CD4-positive, alpha-beta memory T cell (primary cell): ENCODE measurements at regions of chr12 and their contacts with region 1.

Region 1: DNA sequence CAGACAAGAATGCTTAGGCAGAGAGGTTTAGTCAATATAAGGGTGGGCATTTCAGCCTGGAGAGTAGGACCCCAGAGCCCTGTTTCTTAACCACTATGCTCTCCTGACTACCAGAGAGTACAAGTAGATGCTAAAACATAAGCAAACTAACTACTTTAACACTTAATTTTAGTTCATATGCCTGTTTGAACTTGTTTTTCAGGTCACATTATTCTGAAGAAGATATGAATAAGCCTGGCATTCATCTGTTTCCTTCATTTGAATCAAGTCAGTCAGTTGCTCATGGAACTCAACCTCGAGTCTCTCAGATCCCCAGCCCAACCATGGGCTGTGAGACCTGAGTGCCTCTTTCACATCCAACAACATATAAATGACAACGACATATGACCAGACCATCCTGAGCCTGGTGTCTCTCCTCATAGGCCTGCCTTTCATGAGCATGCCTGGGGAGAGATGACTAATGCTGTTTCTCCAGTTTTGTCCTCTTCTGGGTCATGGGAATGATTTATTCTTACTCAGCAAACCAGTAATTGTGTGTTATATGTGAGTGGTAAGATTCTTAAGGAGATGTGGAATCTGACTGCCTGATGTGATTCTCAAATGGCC is 251.1 kb upstream of the BTG1 start:
- DNase-seq: no peak
- H3K4me3 ChIP-seq: no peak overlapping the region
- H3K4me3 Mint-ChIP-seq: peak overlapping the region in 6 of 8 donors; percentile 19 to 81 (median 57)
- H3K27ac ChIP-seq: peak overlapping the region; percentile 72
- H3K27ac Mint-ChIP-seq: peak overlapping the region; percentile 93 to 98 (median 97)
- H3K4me1 ChIP-seq: peaks cover 93% of the 10 kb centered on the region
- H3K4me1 Mint-ChIP-seq: peaks cover 74 to 100% (median 89%) of the 10 kb centered on the region in 4 donors
- H3K27me3 ChIP-seq: no peaks in the 10 kb centered on the region
- H3K27me3 Mint-ChIP-seq: no peaks in the 10 kb centered on the region

Region 2: GRCh38 chr12:92208613-92209121 is 188.1 kb before region 1 on chr12:
- CTCF ChIA-PET with region 1: no interaction called
- POLR2A ChIA-PET with region 1: interaction called, 18 read pairs
- intact Hi-C with region 1: loop called (anchors 2 kb)
- DNase-seq: peak; percentile 61 to 78 (median 66)
- H3K4me3 ChIP-seq: peak overlapping the region in 1 of 2 donors; percentile 30
- H3K4me3 Mint-ChIP-seq: peak overlapping the region; percentile 63 to 88 (median 81)
- H3K27ac ChIP-seq: peak overlapping the region; percentile 19
- H3K27ac Mint-ChIP-seq: peak overlapping the region; percentile 77 to 95 (median 86)
- H3K4me1 ChIP-seq: peaks cover 31% of the 10 kb centered on the region
- H3K4me1 Mint-ChIP-seq: peaks cover 26 to 42% (median 35%) of the 10 kb centered on the region in 4 donors
- H3K27me3 ChIP-seq: no peaks in the 10 kb centered on the region
- H3K27me3 Mint-ChIP-seq: no peaks in the 10 kb centered on the region

Region 3: GRCh38 chr12:92363295-92364146 is 33.2 kb before region 1 on chr12:
- CTCF ChIA-PET with region 1: interaction called, 12 read pairs
- POLR2A ChIA-PET with region 1: interaction called, 27 read pairs
- intact Hi-C with region 1: loop called (anchors 2 kb)
- DNase-seq: peak; percentile 40 to 76 (median 49)
- H3K4me3 ChIP-seq: peak overlapping the region; percentile 14 to 34
- H3K4me3 Mint-ChIP-seq: peak overlapping the region; percentile 44 to 92 (median 78)
- H3K27ac ChIP-seq: peak overlapping the region; percentile 41
- H3K27ac Mint-ChIP-seq: peak overlapping the region; percentile 85 to 97 (median 94)
- H3K4me1 ChIP-seq: peaks cover 66% of the 10 kb centered on the region
- H3K4me1 Mint-ChIP-seq: peaks cover 42 to 75% (median 60%) of the 10 kb centered on the region in 4 donors
- H3K27me3 ChIP-seq: no peaks in the 10 kb centered on the region
- H3K27me3 Mint-ChIP-seq: no peaks in the 10 kb centered on the region

Region 4: DNA sequence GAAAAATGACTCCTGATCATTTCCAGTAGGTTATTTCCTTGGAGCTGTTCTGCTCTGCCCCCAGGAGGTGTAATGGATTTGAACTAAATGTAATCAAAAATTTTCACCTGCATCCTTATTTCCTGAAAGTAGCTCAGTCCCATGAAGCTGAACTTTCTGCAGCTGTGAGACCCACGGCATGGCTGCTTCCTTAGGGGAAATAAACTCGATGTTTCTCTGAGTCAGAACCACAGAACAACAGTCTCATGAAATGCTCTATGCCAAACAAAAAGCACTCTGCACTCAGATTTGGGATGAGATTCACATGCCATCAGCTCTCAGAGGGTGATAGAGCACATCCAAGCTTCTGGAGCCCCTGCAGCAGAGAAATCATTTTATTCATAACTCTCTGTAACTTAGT is 81.9 kb after region 1 on chr12:
- CTCF ChIA-PET with region 1: no interaction called
- POLR2A ChIA-PET with region 1: no interaction called
- intact Hi-C with region 1: no loop called
- DNase-seq: no peak
- H3K4me3 ChIP-seq: no peak overlapping the region
- H3K4me3 Mint-ChIP-seq: no peak overlapping the region
- H3K27ac ChIP-seq: no peak overlapping the region
- H3K27ac Mint-ChIP-seq: peak overlapping the region in 1 of 7 donors; percentile 15
- H3K4me1 ChIP-seq: no peaks in the 10 kb centered on the region
- H3K4me1 Mint-ChIP-seq: no peaks in the 10 kb centered on the region
- H3K27me3 ChIP-seq: no peaks in the 10 kb centered on the region
- H3K27me3 Mint-ChIP-seq: no peaks in the 10 kb centered on the region

Region 5: DNA sequence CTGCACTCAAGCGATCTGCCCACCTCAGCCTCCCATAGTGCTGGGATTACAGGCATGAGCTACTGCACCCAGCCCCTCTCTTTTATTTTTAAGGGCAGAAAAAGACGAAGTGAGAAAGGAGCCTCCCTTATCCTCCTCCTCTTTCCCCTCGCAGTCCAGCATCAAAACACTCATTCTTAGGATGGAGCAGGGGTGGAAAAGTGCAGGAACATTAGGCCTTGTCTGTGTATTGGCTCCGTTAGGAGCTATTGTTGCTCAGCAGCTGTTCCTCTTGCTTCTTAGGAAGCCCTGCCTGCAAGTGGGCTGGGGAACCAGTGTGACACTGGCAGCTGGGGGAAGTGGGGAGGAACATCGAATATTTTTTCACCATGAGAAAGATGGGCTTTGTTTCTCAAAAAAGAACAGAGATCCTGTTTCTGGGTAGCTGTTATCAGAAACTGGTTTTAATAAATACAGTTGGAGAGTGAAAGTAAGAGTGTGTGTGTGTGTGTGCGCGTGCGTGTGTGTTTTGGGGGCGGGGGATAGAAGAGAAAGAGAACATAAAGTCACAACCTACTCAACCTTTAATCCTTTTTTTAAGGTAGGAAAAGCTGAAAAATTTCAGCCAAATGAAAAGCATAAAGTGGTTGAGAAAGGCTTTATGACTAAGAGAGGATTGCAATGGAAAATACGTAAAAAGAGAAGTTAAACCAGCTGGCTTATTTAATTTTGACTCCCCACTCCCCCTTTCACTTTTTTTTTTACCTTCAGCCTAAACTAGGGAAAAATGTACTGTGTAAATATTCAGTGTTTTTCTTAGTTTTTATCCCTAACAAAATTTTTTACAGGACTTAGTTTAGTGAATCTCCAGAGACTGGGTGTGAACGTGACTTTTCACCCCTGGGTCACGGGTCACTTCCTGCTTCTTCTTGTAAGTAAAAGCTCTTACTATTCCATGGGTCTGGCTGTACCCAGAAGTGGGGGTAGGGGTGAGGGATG is 108.8 kb after region 1 on chr12:
- CTCF ChIA-PET with region 1: interaction called, 6 read pairs
- POLR2A ChIA-PET with region 1: interaction called, 16 read pairs
- intact Hi-C with region 1: no loop called
- DNase-seq: peak; percentile 45 to 60 (median 56)
- H3K4me3 ChIP-seq: peak overlapping the region; percentile 28 to 30
- H3K4me3 Mint-ChIP-seq: peak overlapping the region; percentile 80 to 94 (median 91)
- H3K27ac ChIP-seq: peak overlapping the region; percentile 58
- H3K27ac Mint-ChIP-seq: peak overlapping the region; percentile 75 to 98 (median 94)
- H3K4me1 ChIP-seq: peaks cover 42% of the 10 kb centered on the region
- H3K4me1 Mint-ChIP-seq: peaks cover 24 to 37% (median 32%) of the 10 kb centered on the region in 4 donors
- H3K27me3 ChIP-seq: no peaks in the 10 kb centered on the region
- H3K27me3 Mint-ChIP-seq: no peaks in the 10 kb centered on the region

Region 6: DNA sequence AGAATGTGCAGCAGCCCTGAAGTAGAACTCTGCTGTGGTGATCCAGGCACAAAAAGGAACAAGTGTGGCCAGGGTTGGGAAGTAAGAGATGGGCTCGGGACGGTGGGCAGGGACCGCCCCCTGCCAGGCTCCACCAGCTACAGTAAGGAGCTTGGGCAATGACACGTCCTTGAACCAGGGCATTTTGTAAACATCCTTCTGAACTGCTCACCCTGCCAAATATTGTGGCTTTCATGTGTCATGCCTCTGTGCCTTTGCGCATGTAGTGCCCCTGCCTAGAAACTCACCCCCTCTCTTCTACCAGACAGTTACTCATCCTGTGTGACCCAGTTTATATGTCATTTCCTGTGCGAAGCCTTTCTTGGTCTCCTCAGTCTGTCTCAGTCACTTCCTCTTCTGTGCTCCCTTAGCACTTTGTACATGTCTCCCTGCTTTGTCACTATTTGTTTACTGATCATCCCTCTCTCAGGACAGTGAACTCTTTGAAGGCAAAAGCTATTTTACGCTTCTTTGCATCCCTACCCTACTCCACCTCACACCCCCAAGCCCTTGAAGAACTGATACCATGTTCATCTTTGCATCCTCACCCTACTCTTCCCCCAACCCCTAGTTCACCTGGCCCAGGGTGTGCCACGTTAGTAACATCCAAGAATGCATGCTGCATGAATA is 197.1 kb after region 1 on chr12:
- CTCF ChIA-PET with region 1: no interaction called
- POLR2A ChIA-PET with region 1: interaction called, 15 read pairs
- intact Hi-C with region 1: loop called (anchors 2 kb)
- DNase-seq: peak; percentile 87 to 97 (median 94)
- H3K4me3 ChIP-seq: peak overlapping the region in 1 of 2 donors; percentile 37
- H3K4me3 Mint-ChIP-seq: peak overlapping the region in 7 of 8 donors; percentile 43 to 88 (median 71)
- H3K27ac ChIP-seq: peak overlapping the region; percentile 91
- H3K27ac Mint-ChIP-seq: peak overlapping the region; percentile 86 to 100 (median 100)
- H3K4me1 ChIP-seq: peaks cover 35% of the 10 kb centered on the region
- H3K4me1 Mint-ChIP-seq: peaks cover 27 to 38% (median 35%) of the 10 kb centered on the region in 4 donors
- H3K27me3 ChIP-seq: no peaks in the 10 kb centered on the region
- H3K27me3 Mint-ChIP-seq: no peaks in the 10 kb centered on the region